ENCODE measurements at regions of chr11 and their contacts with region 1.

Region 1: GRCh38 chr11:118488480-118489109 is 38.7 kb upstream of the TTC36 start:
- DNase-seq: peak; percentile 66 to 86 (median 80)
- ATAC-seq: peak; percentile 89
- H3K4me3 ChIP-seq: no peak overlapping the region
- H3K4me3 Mint-ChIP-seq: no peak overlapping the region
- H3K27ac ChIP-seq: peak overlapping the region; percentile 53
- H3K27ac Mint-ChIP-seq: peak overlapping the region in 7 of 9 donors; percentile 10 to 89 (median 57)
- H3K4me1 ChIP-seq: no peaks in the 10 kb centered on the region
- H3K4me1 Mint-ChIP-seq: peaks cover 0 to 12% (median 5%) of the 10 kb centered on the region in 7 donors
- H3K27me3 ChIP-seq: no peaks in the 10 kb centered on the region
- H3K27me3 Mint-ChIP-seq: no peaks in the 10 kb centered on the region

Region 2: DNA sequence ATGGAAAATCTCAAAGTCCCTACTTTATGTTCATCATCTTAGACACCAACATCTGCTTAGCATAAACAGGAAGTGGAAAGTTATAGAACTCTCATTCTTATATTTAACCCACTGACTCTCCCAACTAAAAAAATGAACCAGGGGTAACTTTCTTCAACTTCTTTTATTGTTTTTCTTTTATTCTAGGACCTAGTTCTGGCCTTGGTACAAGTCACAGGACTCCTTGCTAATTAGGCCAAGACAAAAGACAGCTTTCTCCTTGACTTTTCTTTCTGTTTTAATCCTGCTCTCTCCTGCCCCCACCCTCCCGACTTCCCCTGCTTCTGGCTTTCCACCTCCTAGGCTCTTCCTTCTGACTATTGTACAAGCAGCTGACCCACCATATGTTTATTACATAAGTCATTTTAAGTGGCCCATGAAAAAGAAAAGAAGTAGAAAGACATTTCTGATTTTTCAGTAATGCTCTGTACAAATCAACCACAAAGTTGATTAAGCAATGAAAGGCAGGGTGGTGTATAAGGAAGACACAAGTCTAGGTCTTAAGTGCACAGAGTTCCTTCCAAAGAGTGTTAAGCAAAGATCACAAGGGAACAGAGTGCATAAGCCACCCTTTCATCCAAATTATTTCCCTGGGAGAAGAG is 282.1 kb before region 1 on chr11:
- CTCF ChIA-PET with region 1: no interaction called
- POLR2A ChIA-PET with region 1: no interaction called
- intact Hi-C with region 1: no loop called
- DNase-seq: peak in 1 of 9 donors; percentile 20
- ATAC-seq: peak; percentile 46
- H3K4me3 ChIP-seq: no peak overlapping the region
- H3K4me3 Mint-ChIP-seq: peak overlapping the region; percentile 20 to 82 (median 54)
- H3K27ac ChIP-seq: peak overlapping the region; percentile 44
- H3K27ac Mint-ChIP-seq: peak overlapping the region in 8 of 9 donors; percentile 61 to 94 (median 88)
- H3K4me1 ChIP-seq: peaks cover 38 to 45% of the 10 kb centered on the region in 2 donors
- H3K4me1 Mint-ChIP-seq: peaks cover 5 to 49% (median 13%) of the 10 kb centered on the region in 7 donors
- H3K27me3 ChIP-seq: no peaks in the 10 kb centered on the region
- H3K27me3 Mint-ChIP-seq: no peaks in the 10 kb centered on the region

Region 3: GRCh38 chr11:118401151-118401878 is 87.3 kb before region 1 on chr11 and contains the start of gene ATP5MG:
- CTCF ChIA-PET with region 1: interaction called, 8 read pairs
- POLR2A ChIA-PET with region 1: interaction called, 3 read pairs
- intact Hi-C with region 1: loop called (anchors 1 to 2 kb)
- DNase-seq: peak; percentile 83 to 96 (median 93)
- ATAC-seq: peak; percentile 71
- H3K4me3 ChIP-seq: peak within 1 kb of the TSS; percentile 79
- H3K4me3 Mint-ChIP-seq: peak within 1 kb of the TSS; percentile 97 to 99 (median 98)
- H3K27ac ChIP-seq: peak within 1 kb of the TSS; percentile 97
- H3K27ac Mint-ChIP-seq: peak within 1 kb of the TSS; percentile 97 to 100 (median 100)
- H3K4me1 ChIP-seq: peaks cover 37 to 58% of the 10 kb centered on the region in 2 donors
- H3K4me1 Mint-ChIP-seq: peaks cover 39 to 78% (median 71%) of the 10 kb centered on the region in 7 donors
- H3K27me3 ChIP-seq: no peaks in the 10 kb centered on the region
- H3K27me3 Mint-ChIP-seq: peaks cover 0 to 2% (median 0%) of the 10 kb centered on the region in 5 donors
- total RNA-seq, gene ATP5MG: 140 to 241 (median 154) TPM

Region 4: GRCh38 chr11:118427707-118428106 is 60.9 kb before region 1 on chr11:
- CTCF ChIA-PET with region 1: no interaction called
- POLR2A ChIA-PET with region 1: no interaction called
- intact Hi-C with region 1: no loop called
- DNase-seq: no peak
- ATAC-seq: no peak
- H3K4me3 ChIP-seq: no peak overlapping the region
- H3K4me3 Mint-ChIP-seq: no peak overlapping the region
- H3K27ac ChIP-seq: no peak overlapping the region
- H3K27ac Mint-ChIP-seq: no peak overlapping the region
- H3K4me1 ChIP-seq: no peaks in the 10 kb centered on the region
- H3K4me1 Mint-ChIP-seq: peaks cover 0 to 7% (median 0%) of the 10 kb centered on the region in 7 donors
- H3K27me3 ChIP-seq: no peaks in the 10 kb centered on the region
- H3K27me3 Mint-ChIP-seq: peaks cover 0 to 22% (median 0%) of the 10 kb centered on the region in 5 donors

Region 5: DNA sequence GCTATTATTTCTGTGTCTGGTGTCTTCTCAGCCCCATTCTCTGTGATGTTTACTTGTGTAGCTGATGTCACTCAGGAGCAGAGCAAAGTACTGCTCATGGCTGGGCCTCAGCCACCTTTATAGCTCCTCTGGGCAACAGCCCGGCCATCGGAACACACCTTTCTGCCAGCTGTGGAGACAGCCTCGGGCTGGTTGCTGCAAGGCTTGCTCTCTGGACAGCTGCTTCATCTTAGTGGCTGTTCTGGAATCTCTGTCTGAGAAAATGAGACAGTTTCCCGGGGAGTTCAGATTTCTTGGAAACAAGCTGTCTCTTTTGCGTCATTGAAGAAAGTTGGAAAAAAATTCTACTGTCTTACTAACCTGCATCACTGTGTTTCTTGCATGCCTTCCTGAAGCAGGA is 914.4 kb after region 1 on chr11:
- CTCF ChIA-PET with region 1: no interaction called
- POLR2A ChIA-PET with region 1: no interaction called
- intact Hi-C with region 1: no loop called
- DNase-seq: no peak
- ATAC-seq: no peak
- H3K4me3 ChIP-seq: no peak overlapping the region
- H3K4me3 Mint-ChIP-seq: no peak overlapping the region
- H3K27ac ChIP-seq: no peak overlapping the region
- H3K27ac Mint-ChIP-seq: no peak overlapping the region
- H3K4me1 ChIP-seq: no peaks in the 10 kb centered on the region
- H3K4me1 Mint-ChIP-seq: no peaks in the 10 kb centered on the region
- H3K27me3 ChIP-seq: no peaks in the 10 kb centered on the region
- H3K27me3 Mint-ChIP-seq: peaks cover 10 to 25% (median 17%) of the 10 kb centered on the region in 5 donors

Measured in naive thymus-derived CD4-positive, alpha-beta T cell (primary cell).